ENCODE measurements at regions of chr2 and their contacts with region 1.

Region 1: GRCh38 chr2:54503192-54503591 is 47.1 kb downstream of the SPTBN1 start:
- DNase-seq: no peak
- ATAC-seq: peak; percentile 19 to 47
- H3K4me3 ChIP-seq: no peak overlapping the region
- H3K27ac ChIP-seq: peak overlapping the region; percentile 2
- H3K4me1 ChIP-seq: peaks cover 26% of the 10 kb centered on the region
- H3K27me3 ChIP-seq: no peaks in the 10 kb centered on the region

Region 2: GRCh38 chr2:54206596-54206995 is 296.6 kb before region 1 on chr2:
- intact Hi-C with region 1: loop called in 1 of 4 experiments (anchors 10 kb)
- DNase-seq: no peak
- ATAC-seq: peak in 1 of 2 donors; percentile 48
- H3K4me3 ChIP-seq: no peak overlapping the region
- H3K27ac ChIP-seq: no peak overlapping the region
- H3K4me1 ChIP-seq: peaks cover 4% of the 10 kb centered on the region
- H3K27me3 ChIP-seq: no peaks in the 10 kb centered on the region

Region 3: GRCh38 chr2:54459037-54459441 is 44.2 kb before region 1 on chr2:
- intact Hi-C with region 1: no loop called
- DNase-seq: no peak
- ATAC-seq: no peak
- H3K4me3 ChIP-seq: peak overlapping the region; percentile 96
- H3K27ac ChIP-seq: peak overlapping the region; percentile 85
- H3K4me1 ChIP-seq: peaks cover 5% of the 10 kb centered on the region
- H3K27me3 ChIP-seq: no peaks in the 10 kb centered on the region

Measured in right cardiac atrium (tissue), 5 donors.